ENCODE measurements at regions of chr12 and their contacts with region 1.

Region 1: GRCh38 chr12:24991209-24992049 is 42.5 kb upstream of the BCAT1 start:
- DNase-seq: peak; percentile 69
- H3K4me3 Mint-ChIP-seq: no peak overlapping the region
- H3K27ac Mint-ChIP-seq: no peak overlapping the region
- H3K4me1 Mint-ChIP-seq: peaks cover 5% of the 10 kb centered on the region
- H3K27me3 Mint-ChIP-seq: no peaks in the 10 kb centered on the region
- CTCF ChIP-seq: peak; percentile 51

Region 2: GRCh38 chr12:25005376-25005775 is 13.9 kb after region 1 on chr12:
- CTCF ChIA-PET with region 1: interaction called, 12 read pairs
- POLR2A ChIA-PET with region 1: interaction called, 4 read pairs
- intact Hi-C with region 1: no loop called
- DNase-seq: no peak
- H3K4me3 Mint-ChIP-seq: no peak overlapping the region
- H3K27ac Mint-ChIP-seq: no peak overlapping the region
- H3K4me1 Mint-ChIP-seq: no peaks in the 10 kb centered on the region
- H3K27me3 Mint-ChIP-seq: no peaks in the 10 kb centered on the region
- CTCF ChIP-seq: no peak

Region 3: DNA sequence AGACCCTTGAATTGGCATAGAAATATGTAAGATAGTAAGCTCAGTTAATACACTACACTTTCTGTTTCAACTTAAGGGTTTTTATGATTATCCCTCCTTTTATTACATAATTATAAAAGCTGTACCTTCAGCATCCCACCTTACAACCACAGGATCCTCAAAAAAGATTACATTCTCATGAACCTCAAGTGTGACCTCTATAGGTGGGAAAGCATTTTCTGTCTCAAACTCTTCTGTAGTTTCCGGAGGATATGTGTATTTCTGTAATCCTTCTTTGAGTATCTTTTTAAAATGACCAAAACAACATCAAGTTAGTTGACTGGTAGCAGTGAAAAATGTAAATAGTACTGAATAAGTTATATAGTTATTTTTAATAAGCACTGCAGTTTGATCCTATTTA is 127.6 kb after region 1 on chr12:
- CTCF ChIA-PET with region 1: interaction called, 24 read pairs
- POLR2A ChIA-PET with region 1: no interaction called
- intact Hi-C with region 1: loop called (anchors 1 kb)
- DNase-seq: peak; percentile 4
- H3K4me3 Mint-ChIP-seq: no peak overlapping the region
- H3K27ac Mint-ChIP-seq: no peak overlapping the region
- H3K4me1 Mint-ChIP-seq: peaks cover 12% of the 10 kb centered on the region
- H3K27me3 Mint-ChIP-seq: no peaks in the 10 kb centered on the region
- CTCF ChIP-seq: peak; percentile 13

Region 4: DNA sequence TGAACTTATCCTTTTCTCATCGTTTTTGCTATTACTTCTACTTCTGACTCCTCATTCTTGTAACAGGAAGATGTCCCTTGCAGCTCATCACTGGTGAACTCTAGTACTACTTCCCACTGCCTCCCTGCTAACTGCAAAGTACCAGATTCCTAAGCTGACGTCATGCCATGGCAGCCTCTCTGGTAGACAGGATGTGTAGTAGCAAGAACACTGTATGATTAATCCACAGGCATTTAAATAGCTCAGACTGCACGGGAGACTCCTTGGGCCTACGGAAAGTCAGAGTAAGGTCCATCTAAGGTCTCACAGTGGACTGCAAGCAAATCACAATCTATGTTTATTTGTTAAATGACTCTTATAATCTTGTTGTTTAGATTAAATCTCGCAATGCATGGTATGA is 160.0 kb after region 1 on chr12:
- CTCF ChIA-PET with region 1: interaction called, 53 read pairs
- POLR2A ChIA-PET with region 1: interaction called, 11 read pairs
- intact Hi-C with region 1: loop called (anchors 1 kb)
- DNase-seq: peak; percentile 76
- H3K4me3 Mint-ChIP-seq: no peak overlapping the region
- H3K27ac Mint-ChIP-seq: no peak overlapping the region
- H3K4me1 Mint-ChIP-seq: peaks cover 10% of the 10 kb centered on the region
- H3K27me3 Mint-ChIP-seq: no peaks in the 10 kb centered on the region
- CTCF ChIP-seq: no peak

Region 5: DNA sequence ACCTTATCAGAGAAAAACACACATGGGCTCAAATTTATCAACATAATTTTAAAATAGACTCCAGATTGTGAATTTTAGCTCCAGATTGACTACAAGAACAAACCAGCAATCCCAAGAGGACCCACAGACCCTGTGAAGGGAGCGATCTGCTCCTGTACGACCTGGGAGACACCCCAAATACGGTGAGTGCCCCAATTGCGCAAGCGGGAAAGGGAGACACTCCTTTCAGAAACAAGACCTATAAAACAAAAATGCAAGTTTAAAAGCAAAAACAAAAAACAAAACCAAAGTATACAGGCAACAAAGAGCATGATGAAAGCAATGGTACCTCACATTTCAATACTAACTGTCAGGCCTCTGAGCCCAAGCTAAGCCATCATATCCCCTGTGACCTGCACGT is 171.4 kb after region 1 on chr12:
- CTCF ChIA-PET with region 1: no interaction called
- POLR2A ChIA-PET with region 1: no interaction called
- intact Hi-C with region 1: no loop called
- DNase-seq: no peak
- H3K4me3 Mint-ChIP-seq: no peak overlapping the region
- H3K27ac Mint-ChIP-seq: no peak overlapping the region
- H3K4me1 Mint-ChIP-seq: no peaks in the 10 kb centered on the region
- H3K27me3 Mint-ChIP-seq: no peaks in the 10 kb centered on the region
- CTCF ChIP-seq: no peak

Measured in MCF 10A (cell line).